ENCODE measurements at regions of chr18 and their contacts with region 1.

Region 1: GRCh38 chr18:12317664-12318333 is 9.8 kb downstream of the TUBB6 start:
- DNase-seq: no peak
- ATAC-seq: peak; percentile 74

Region 2: DNA sequence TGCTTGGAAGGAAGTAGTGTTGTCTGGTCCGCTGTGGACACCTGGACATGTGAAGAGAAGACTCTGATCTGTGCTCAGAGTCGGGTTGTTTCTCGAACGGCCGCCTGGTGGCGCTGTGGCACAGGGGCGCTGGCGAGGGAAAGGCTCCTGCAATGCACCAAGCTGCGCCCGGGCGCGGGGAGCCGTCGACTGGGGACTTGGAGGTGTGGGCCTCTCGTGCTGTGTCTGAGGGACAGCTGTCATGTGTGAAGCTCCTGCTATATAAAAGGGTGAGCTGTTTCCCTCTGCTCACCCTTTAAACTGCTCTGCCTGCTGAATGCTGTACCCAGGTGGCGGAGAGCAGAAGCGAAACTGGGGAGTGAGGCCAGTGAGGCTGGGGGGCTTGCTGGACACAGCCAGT is 584.8 kb before region 1 on chr18:
- intact Hi-C with region 1: no loop called
- DNase-seq: peak; percentile 88
- ATAC-seq: peak; percentile 99

Region 3: DNA sequence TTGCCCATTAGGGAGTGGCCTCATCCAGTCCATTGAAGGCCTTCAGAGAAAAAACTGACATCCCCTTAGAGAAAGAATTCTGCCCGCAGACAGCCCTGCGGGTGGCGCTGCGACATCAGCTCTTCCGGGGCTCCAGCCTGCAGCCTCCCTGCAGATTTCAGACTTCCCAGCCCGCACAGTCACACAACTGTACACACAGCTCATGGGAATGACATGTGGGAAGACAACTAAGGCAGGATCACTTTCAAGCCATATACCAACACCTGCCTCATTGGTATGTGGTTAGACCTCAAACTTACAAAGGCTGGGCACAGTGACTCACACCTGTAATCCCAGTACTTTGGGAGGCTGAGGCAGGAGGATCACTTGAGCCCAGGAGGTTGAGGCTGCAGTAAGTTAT is 34.5 kb before region 1 on chr18:
- intact Hi-C with region 1: loop called (anchors 5 kb)
- DNase-seq: no peak
- ATAC-seq: no peak

Region 4: GRCh38 chr18:12376718-12377555 is 59.1 kb after region 1 on chr18 and contains the start of gene AFG3L2:
- intact Hi-C with region 1: loop called (anchors 10 kb)
- DNase-seq: peak; percentile 100
- ATAC-seq: peak; percentile 91
- total RNA-seq, gene AFG3L2: 145 TPM

Measured in Right ventricle myocardium superior (tissue), 1 donor.